ENCODE measurements at regions of chr4 and their contacts with region 1.

Region 1: DNA sequence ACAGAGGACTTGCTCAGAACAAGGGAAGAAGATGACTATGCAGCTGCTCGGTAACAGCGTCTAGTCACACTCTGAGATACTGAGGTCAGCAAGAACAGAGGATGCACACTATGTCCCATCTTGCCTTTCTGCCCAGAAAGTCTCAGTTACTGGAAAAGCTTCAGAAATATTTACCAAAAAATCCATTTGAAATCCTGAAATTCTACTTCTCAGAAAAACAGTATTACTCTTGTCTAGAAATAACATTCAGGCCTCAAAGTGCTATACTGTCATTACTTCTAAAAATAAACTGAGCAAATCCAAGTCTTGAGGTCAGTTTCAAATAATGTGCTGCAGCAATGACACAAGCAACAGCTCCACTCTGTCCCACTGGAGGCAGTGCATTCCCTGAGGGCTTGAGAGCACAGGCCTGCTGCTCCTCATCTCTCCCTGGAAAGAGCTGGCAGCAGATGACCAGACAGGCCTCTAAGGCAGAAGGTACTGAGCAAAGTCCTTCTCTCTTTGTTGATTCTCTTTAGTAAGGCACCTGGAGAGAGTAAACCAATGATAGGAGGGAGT is 76.9 kb downstream of the CAMK2D start:
- DNase-seq: peak; percentile 63
- H3K4me3 ChIP-seq: no peak overlapping the region
- H3K27ac ChIP-seq: peak overlapping the region; percentile 43 to 67 (median 62)
- H3K4me1 ChIP-seq: peaks cover 14 to 41% (median 27%) of the 10 kb centered on the region in 4 donors
- H3K27me3 ChIP-seq: no peaks in the 10 kb centered on the region
- CTCF ChIP-seq: peak; percentile 29 to 53 (median 42)
- EP300 ChIP-seq: no peak
- POLR2A ChIP-seq: no peak

Region 2: DNA sequence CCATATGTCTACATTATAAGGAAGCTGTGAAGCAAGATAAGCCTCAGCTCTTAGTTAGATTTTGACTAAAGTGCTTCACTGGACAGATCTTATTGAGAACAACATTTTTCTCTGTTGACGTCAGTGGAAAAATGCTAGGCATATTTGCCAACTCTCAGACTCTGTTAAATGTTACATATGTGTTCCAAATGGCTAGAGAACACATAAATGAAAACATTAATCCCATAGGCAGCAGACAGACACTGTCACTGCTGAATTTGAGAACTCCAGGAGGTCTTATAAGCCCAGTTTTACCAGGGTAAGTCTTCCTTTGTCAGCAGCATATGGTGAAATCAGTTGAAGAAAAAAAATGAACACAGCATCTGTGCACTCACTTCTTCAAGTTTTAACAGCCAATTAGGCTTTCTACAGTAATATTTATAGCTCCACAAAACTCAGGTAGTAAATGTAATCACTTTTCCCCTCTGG is 109.9 kb before region 1 on chr4:
- in situ Hi-C with region 1: loop called in 1 of 4 experiments (anchors 25 kb)
- intact Hi-C with region 1: no loop called
- DNase-seq: no peak
- H3K4me3 ChIP-seq: no peak overlapping the region
- H3K27ac ChIP-seq: peak overlapping the region in 3 of 4 donors; percentile 23 to 41 (median 28)
- H3K4me1 ChIP-seq: peaks cover 9 to 22% (median 17%) of the 10 kb centered on the region in 4 donors
- H3K27me3 ChIP-seq: no peaks in the 10 kb centered on the region
- CTCF ChIP-seq: no peak
- EP300 ChIP-seq: no peak
- POLR2A ChIP-seq: no peak

Region 3: GRCh38 chr4:114005569-114006442 is 321.2 kb after region 1 on chr4:
- in situ Hi-C with region 1: no loop called
- intact Hi-C with region 1: no loop called
- DNase-seq: no peak
- H3K4me3 ChIP-seq: no peak overlapping the region
- H3K27ac ChIP-seq: no peak overlapping the region
- H3K4me1 ChIP-seq: peaks cover 0 to 19% (median 11%) of the 10 kb centered on the region in 4 donors
- H3K27me3 ChIP-seq: no peaks in the 10 kb centered on the region
- CTCF ChIP-seq: no peak
- EP300 ChIP-seq: no peak
- POLR2A ChIP-seq: no peak